CD4-positive, alpha-beta T cell (primary cell): ENCODE measurements at regions of chr6 and their contacts with region 1.

Region 1: DNA sequence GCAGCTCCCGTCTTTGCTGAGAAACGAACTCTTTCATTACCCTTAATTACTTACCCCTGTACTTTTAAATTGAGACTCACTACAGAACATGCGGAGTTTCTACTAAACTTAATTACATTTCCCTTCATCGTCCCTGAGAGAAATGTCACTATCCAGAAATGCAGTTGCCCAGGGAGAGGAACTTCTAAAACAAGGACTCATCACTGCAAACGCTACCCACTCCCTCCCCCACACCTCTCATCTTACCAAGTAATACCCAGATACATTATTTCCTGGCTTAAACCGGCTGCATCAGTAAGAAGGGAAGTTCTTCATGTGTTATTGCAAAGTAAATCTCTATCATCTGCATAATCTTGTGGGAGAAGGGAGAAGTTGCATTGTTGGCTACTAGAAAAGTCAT is 138.3 kb downstream of the IPCEF1 start:
- DNase-seq: peak in 1 of 14 experiments; percentile 41
- ATAC-seq: no peak
- H3K4me3 ChIP-seq: no peak overlapping the region
- H3K4me3 Mint-ChIP-seq: peak overlapping the region; percentile 62
- H3K27ac ChIP-seq: peak overlapping the region in 1 of 2 donors; percentile 31
- H3K27ac Mint-ChIP-seq: peak overlapping the region; percentile 74
- H3K4me1 ChIP-seq: peaks cover 24% of the 10 kb centered on the region
- H3K4me1 Mint-ChIP-seq: peaks cover 68% of the 10 kb centered on the region
- H3K27me3 ChIP-seq: no peaks in the 10 kb centered on the region
- H3K27me3 Mint-ChIP-seq: no peaks in the 10 kb centered on the region
- CTCF ChIP-seq: no peak

Region 2: GRCh38 chr6:154229786-154230185 is 11.5 kb after region 1 on chr6:
- CTCF ChIA-PET with region 1: interaction called, 4 read pairs
- POLR2A ChIA-PET with region 1: interaction called, 15 read pairs
- intact Hi-C with region 1: no loop called
- DNase-seq: peak in 4 of 14 experiments; percentile 42 to 81 (median 65)
- ATAC-seq: peak; percentile 60
- H3K4me3 ChIP-seq: peak overlapping the region; percentile 39
- H3K4me3 Mint-ChIP-seq: peak overlapping the region; percentile 89
- H3K27ac ChIP-seq: peak overlapping the region in 1 of 2 donors; percentile 40
- H3K27ac Mint-ChIP-seq: peak overlapping the region; percentile 87
- H3K4me1 ChIP-seq: peaks cover 39% of the 10 kb centered on the region
- H3K4me1 Mint-ChIP-seq: peaks cover 82% of the 10 kb centered on the region
- H3K27me3 ChIP-seq: no peaks in the 10 kb centered on the region
- H3K27me3 Mint-ChIP-seq: no peaks in the 10 kb centered on the region
- CTCF ChIP-seq: no peak

Region 3: DNA sequence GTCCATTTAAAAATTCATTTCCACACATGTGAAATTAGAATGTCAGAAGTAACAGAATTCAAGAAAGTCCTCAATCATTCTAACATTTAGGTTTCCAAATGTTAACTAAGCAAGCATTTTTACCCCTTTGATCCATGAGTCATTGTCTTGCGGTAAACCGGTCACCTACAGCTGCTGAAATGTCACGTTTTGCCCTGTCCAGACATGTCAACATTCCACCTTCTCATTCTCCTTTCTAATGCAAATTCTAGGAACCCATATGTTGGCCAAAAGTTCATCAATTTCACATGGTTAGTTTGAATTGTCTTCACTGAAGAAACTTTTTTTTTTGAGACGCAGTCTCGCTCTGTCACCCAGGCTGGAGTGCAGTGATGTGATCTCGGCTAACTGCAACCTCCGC is 21.1 kb after region 1 on chr6:
- CTCF ChIA-PET with region 1: interaction called, 3 read pairs
- POLR2A ChIA-PET with region 1: interaction called, 15 read pairs
- intact Hi-C with region 1: no loop called
- DNase-seq: peak in 4 of 14 experiments; percentile 40 to 67 (median 54)
- ATAC-seq: peak; percentile 62
- H3K4me3 ChIP-seq: peak overlapping the region; percentile 19
- H3K4me3 Mint-ChIP-seq: peak overlapping the region; percentile 82
- H3K27ac ChIP-seq: no peak overlapping the region
- H3K27ac Mint-ChIP-seq: peak overlapping the region; percentile 83
- H3K4me1 ChIP-seq: peaks cover 51% of the 10 kb centered on the region
- H3K4me1 Mint-ChIP-seq: peaks cover 80% of the 10 kb centered on the region
- H3K27me3 ChIP-seq: no peaks in the 10 kb centered on the region
- H3K27me3 Mint-ChIP-seq: no peaks in the 10 kb centered on the region
- CTCF ChIP-seq: no peak

Region 4: GRCh38 chr6:154247119-154247861 is 29.0 kb after region 1 on chr6:
- CTCF ChIA-PET with region 1: interaction called, 3 read pairs
- POLR2A ChIA-PET with region 1: interaction called, 15 read pairs
- intact Hi-C with region 1: loop called in 1 of 2 experiments (anchors 5 kb)
- DNase-seq: peak in 5 of 14 experiments; percentile 19 to 78 (median 63)
- ATAC-seq: peak; percentile 54
- H3K4me3 ChIP-seq: peak overlapping the region; percentile 72
- H3K4me3 Mint-ChIP-seq: peak overlapping the region; percentile 95
- H3K27ac ChIP-seq: peak overlapping the region; percentile 75 to 88
- H3K27ac Mint-ChIP-seq: peak overlapping the region; percentile 93
- H3K4me1 ChIP-seq: peaks cover 42% of the 10 kb centered on the region
- H3K4me1 Mint-ChIP-seq: peaks cover 94% of the 10 kb centered on the region
- H3K27me3 ChIP-seq: no peaks in the 10 kb centered on the region
- H3K27me3 Mint-ChIP-seq: no peaks in the 10 kb centered on the region
- CTCF ChIP-seq: no peak